Activated CD8-positive, alpha-beta T cell treated with anti-CD3 and anti-CD28 coated beads, Interleukin-2, amount 10 ng/mL, durations not matched to agents 7 days and 5 days (primary cell): ENCODE measurements at regions of chr14 and their contacts with region 1.

Region 1: DNA sequence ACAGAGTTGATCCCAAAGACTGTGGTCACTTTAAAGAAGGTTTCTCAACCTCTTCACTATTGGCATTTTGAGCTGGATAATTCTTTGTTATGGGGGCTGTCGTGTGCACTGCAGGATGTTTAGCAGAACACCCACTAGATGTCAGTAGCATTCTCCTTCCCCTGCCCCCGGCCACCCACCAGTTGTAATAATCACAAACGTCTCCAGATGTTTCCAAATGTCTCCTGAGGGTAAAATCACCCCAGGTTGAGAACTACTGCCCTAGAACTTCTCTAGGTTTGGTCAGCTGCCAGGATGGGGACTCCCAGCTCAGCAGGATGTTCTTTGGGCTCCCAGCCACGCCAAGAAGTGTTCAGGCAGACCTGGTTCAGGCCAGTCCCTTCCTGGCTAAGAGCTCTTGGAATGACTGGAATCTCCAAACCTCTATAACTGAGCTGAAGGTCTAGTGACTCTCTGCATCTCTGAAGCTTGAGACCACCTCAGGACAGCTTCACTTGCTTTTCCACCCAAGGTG is 12.5 kb upstream of the AJUBA start:
- DNase-seq: peak; percentile 56
- ATAC-seq: peak; percentile 83
- H3K4me3 Mint-ChIP-seq: no peak overlapping the region
- H3K27ac Mint-ChIP-seq: no peak overlapping the region
- H3K4me1 Mint-ChIP-seq: peaks cover 3% of the 10 kb centered on the region
- H3K27me3 Mint-ChIP-seq: no peaks in the 10 kb centered on the region

Region 2: GRCh38 chr14:22973217-22974032 is 21.4 kb before region 1 on chr14:
- CTCF ChIA-PET with region 1: interaction called, 24 read pairs
- POLR2A ChIA-PET with region 1: no interaction called
- DNase-seq: peak; percentile 55
- ATAC-seq: no peak
- H3K4me3 Mint-ChIP-seq: no peak overlapping the region
- H3K27ac Mint-ChIP-seq: no peak overlapping the region
- H3K4me1 Mint-ChIP-seq: no peaks in the 10 kb centered on the region
- H3K27me3 Mint-ChIP-seq: peaks cover 7% of the 10 kb centered on the region

Region 3: DNA sequence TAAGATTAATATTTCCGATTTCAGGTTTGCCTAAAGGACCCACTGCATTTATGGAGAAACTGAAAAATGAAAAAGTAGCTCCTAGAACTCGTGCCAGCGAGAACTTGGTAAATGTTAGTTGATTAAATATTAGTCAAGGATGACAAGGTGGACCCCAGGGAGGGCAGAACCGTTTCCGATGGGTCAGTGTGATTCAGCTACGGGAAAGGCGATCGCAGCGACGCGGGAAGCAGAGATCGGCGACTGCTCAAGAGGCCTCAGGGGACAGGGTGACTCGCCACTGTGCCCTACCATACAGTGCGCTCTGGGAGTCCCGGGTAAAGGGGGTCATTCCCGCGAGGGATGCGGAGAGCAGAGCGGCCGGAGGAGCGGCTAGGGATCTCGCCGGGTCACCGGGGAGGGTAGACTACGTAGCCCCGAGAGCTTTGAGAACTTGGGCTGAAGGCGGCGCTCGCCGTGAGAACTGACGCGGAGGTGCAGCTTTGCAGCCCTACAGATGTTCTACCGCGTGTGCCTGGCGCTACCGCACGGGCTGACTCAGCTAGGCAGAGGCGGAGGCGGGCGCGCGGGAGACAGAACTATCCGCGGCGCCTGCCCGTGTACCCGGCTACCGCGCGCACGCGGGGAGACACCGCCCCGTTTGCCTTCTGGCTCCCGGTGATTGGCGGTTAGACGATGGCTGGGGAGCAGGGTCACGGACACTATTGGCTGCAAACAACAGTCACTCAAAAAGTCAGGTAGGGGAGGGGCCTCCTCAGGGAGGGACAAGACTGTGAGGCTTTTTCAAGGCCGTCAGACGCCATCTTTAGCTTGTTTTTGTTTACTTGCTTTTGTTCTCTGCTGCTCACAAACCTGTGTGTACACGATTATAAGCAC is 12.0 kb after region 1 on chr14:
- CTCF ChIA-PET with region 1: interaction called, 121 read pairs
- POLR2A ChIA-PET with region 1: interaction called, 21 read pairs
- DNase-seq: peak; percentile 98
- ATAC-seq: peak; percentile 99
- H3K4me3 Mint-ChIP-seq: peak overlapping the region; percentile 94
- H3K27ac Mint-ChIP-seq: peak overlapping the region; percentile 98
- H3K4me1 Mint-ChIP-seq: peaks cover 51% of the 10 kb centered on the region
- H3K27me3 Mint-ChIP-seq: no peaks in the 10 kb centered on the region

Region 4: DNA sequence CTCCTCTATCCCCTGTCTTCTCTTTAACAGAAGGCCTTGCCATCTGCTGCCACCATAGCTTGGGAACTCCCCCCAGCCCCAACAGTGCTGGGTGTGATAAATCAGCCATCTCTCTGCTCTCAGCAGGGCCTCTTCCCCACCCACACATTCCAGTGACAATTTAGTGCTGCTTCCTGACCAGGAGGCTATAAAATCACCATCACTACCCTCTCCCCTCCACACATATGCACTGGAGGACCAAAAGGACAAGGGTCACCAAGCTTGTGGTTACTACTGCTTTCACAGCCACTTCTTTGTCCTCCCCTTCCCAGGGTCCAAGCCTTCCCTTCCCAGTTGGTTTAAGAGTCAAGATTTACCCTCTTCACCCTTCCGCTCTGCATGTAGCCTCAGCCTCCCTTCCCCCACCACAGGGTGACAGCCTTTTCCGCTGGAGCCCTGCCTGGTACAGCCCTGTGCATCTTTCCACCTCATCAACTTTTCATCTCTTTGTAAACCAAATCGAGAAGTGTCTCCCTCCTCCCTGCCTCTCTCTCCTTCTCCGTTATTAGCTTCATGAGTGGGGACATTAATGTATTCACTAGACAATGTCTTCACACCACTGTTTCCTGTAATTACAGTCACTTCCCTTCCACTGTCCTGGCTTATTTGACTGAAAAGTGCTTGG is 30.5 kb after region 1 on chr14:
- CTCF ChIA-PET with region 1: interaction called, 28 read pairs
- POLR2A ChIA-PET with region 1: interaction called, 3 read pairs
- DNase-seq: no peak
- ATAC-seq: no peak
- H3K4me3 Mint-ChIP-seq: no peak overlapping the region
- H3K27ac Mint-ChIP-seq: peak overlapping the region; percentile 40
- H3K4me1 Mint-ChIP-seq: peaks cover 50% of the 10 kb centered on the region
- H3K27me3 Mint-ChIP-seq: no peaks in the 10 kb centered on the region

Region 5: DNA sequence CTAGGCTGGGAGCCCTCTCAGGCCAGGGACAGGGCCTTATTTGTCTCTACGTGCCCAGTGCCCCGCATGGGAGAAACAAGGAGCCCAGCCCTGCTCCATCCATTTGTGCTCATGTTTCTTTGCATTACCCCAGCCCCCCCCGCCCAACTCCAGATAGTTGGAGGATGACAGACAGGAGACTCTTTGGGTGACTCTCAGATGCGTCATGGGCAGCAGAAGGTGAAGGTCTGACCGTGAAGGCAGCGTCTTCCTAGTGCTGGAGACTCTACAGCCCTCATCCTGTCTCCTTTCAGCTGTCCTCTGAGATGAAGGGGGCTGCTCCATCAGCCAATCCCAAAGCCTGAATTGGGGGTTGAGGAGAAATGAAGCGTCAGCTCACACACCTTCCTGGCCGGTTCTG is 46.9 kb after region 1 on chr14:
- CTCF ChIA-PET with region 1: interaction called, 13 read pairs
- POLR2A ChIA-PET with region 1: no interaction called
- DNase-seq: no peak
- ATAC-seq: no peak
- H3K4me3 Mint-ChIP-seq: no peak overlapping the region
- H3K27ac Mint-ChIP-seq: no peak overlapping the region
- H3K4me1 Mint-ChIP-seq: no peaks in the 10 kb centered on the region
- H3K27me3 Mint-ChIP-seq: no peaks in the 10 kb centered on the region

Region 6: GRCh38 chr14:23052182-23052623 is 57.4 kb after region 1 on chr14:
- CTCF ChIA-PET with region 1: interaction called, 489 read pairs
- POLR2A ChIA-PET with region 1: no interaction called
- DNase-seq: no peak
- ATAC-seq: no peak
- H3K4me3 Mint-ChIP-seq: no peak overlapping the region
- H3K27ac Mint-ChIP-seq: no peak overlapping the region
- H3K4me1 Mint-ChIP-seq: peaks cover 12% of the 10 kb centered on the region
- H3K27me3 Mint-ChIP-seq: peaks cover 9% of the 10 kb centered on the region

Region 7: GRCh38 chr14:23076785-23077408 is 82.1 kb after region 1 on chr14:
- CTCF ChIA-PET with region 1: interaction called, 13 read pairs
- POLR2A ChIA-PET with region 1: no interaction called
- DNase-seq: peak; percentile 56
- ATAC-seq: peak; percentile 63
- H3K4me3 Mint-ChIP-seq: no peak overlapping the region
- H3K27ac Mint-ChIP-seq: no peak overlapping the region
- H3K4me1 Mint-ChIP-seq: peaks cover 5% of the 10 kb centered on the region
- H3K27me3 Mint-ChIP-seq: no peaks in the 10 kb centered on the region